HEK293 (cell line): ENCODE measurements at regions of chr1 and their contacts with region 1.

Region 1: DNA sequence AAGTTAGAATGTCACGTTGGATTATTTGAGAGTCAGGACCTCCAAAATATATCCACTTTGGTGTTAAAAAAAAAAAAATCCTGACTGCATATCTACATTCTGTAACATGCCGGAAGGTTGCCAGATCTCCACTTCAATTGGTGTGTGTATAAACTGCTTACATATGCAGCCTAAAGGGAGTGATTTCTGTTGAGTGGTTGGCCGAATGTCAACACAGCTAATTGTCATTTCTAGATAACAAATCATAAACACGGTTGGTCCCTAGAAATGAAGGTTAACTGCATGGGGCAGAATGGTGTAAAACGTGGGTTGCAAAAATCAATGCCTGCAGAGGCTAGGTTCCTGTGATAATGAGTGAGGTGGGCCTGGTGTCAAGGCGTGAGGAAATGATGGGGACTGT is 15.0 kb upstream of the ROR1 start:
- H3K4me3 ChIP-seq: no peak overlapping the region
- H3K27ac ChIP-seq: no peak overlapping the region
- H3K4me1 ChIP-seq: peaks cover 8% of the 10 kb centered on the region; the same call in 1 of the 2 replicates
- CTCF ChIP-seq: no peak

Region 2: GRCh38 chr1:63773815-63774616 is 15.2 kb after region 1 on chr1 and contains the start of gene ROR1:
- CTCF ChIA-PET with region 1: interaction called, 10 read pairs
- POLR2A ChIA-PET with region 1: interaction called, 3 read pairs
- H3K4me3 ChIP-seq: peak within 1 kb of the TSS; percentile 80
- H3K27ac ChIP-seq: peak within 1 kb of the TSS; percentile 92
- H3K4me1 ChIP-seq: peaks cover 24% of the 10 kb centered on the region
- CTCF ChIP-seq: peak; percentile 98